ENCODE measurements at regions of chr1 and their contacts with region 1.

Region 1: DNA sequence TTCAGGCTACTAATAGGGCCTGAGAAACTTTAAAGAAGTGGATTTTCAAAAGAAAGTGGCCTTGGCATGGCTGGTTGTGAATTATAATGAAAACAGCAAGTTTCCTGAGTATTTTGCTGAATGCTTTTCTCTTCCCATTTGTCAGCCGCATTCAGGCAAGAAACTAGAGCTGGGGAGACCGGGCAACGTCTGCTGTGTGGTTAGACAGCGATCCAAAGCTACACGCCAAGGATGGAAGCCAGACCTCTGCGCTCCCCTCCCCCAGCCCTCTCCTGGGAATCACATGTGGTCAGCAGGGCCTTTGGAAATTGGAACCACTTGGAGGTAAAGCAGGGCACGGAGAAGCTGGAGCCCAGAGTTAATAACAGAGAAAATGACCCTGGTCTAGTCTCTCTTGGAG is 114.1 kb upstream of the CD34 start:
- DNase-seq: no peak
- H3K4me3 ChIP-seq: no peak overlapping the region
- H3K27ac ChIP-seq: no peak overlapping the region
- H3K4me1 ChIP-seq: no peaks in the 10 kb centered on the region
- H3K27me3 ChIP-seq: no peaks in the 10 kb centered on the region
- CTCF ChIP-seq: no peak

Region 2: GRCh38 chr1:207873055-207873890 is 151.8 kb before region 1 on chr1:
- CTCF ChIA-PET with region 1: no interaction called
- POLR2A ChIA-PET with region 1: no interaction called
- intact Hi-C with region 1: no loop called
- DNase-seq: no peak
- H3K4me3 ChIP-seq: no peak overlapping the region
- H3K27ac ChIP-seq: no peak overlapping the region
- H3K4me1 ChIP-seq: no peaks in the 10 kb centered on the region
- H3K27me3 ChIP-seq: no peaks in the 10 kb centered on the region
- CTCF ChIP-seq: no peak

Region 3: GRCh38 chr1:207941665-207942064 is 83.4 kb before region 1 on chr1:
- CTCF ChIA-PET with region 1: no interaction called
- POLR2A ChIA-PET with region 1: no interaction called
- intact Hi-C with region 1: no loop called
- DNase-seq: peak; percentile 37
- H3K4me3 ChIP-seq: no peak overlapping the region
- H3K27ac ChIP-seq: no peak overlapping the region
- H3K4me1 ChIP-seq: no peaks in the 10 kb centered on the region
- H3K27me3 ChIP-seq: peaks cover 50% of the 10 kb centered on the region
- CTCF ChIP-seq: no peak

Region 4: DNA sequence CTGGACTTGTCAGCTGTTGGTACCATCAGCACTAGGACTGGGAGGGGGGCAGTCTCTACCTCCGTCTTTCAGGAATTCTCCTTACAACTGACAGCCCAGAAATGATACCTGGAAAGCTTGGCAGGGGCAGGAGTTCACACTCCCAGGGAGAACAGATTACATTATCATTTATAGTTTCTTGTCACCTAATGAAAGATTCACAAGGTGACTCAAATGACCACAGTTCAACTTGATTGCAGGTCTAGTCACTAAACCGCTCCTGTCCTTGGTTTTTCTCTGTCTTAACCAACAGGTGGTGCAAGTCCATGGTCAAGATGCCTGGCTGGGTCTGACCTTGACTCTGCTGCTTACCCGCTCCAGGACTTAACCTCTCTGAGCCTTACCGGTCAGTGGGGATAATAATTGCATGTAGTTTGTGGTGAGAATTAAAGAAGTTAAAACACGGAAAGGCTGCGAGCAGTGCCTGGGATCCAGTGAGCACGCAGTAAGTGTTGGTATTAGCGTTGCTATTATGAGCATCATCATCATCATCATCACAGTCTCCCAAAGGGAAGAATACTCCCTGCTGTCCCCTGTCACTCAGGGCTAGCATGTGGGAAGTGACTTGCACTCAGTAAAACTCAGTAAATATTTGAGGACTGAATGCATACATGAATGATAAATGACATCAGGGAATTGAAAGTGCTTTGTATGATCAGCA is 11.2 kb after region 1 on chr1:
- CTCF ChIA-PET with region 1: interaction called, 13 read pairs
- POLR2A ChIA-PET with region 1: no interaction called
- intact Hi-C with region 1: no loop called
- DNase-seq: no peak
- H3K4me3 ChIP-seq: no peak overlapping the region
- H3K27ac ChIP-seq: no peak overlapping the region
- H3K4me1 ChIP-seq: no peaks in the 10 kb centered on the region
- H3K27me3 ChIP-seq: peaks cover 27% of the 10 kb centered on the region
- CTCF ChIP-seq: no peak

Region 5: DNA sequence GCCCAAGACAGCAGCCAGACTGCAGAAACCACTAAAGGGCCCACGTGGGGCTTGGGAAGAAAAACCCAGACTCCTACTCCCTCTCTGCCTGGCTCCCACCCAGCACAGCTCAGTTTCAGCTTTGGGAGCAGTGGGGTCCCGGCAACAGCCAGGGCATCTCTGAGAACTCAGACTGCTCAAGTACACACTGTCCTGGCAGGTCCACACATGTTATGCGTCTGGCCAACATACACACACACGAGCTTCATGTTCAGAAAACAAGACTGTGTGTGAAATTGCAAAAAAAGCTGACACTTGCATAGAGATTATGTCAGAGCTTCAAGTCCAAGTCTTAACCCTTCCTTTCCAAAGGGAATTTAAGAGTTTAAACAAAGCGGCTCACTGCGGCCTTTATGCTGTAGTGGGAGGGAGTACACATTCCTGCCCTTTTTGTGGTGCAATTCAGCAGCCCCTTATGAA is 22.5 kb after region 1 on chr1:
- CTCF ChIA-PET with region 1: interaction called, 10 read pairs
- POLR2A ChIA-PET with region 1: no interaction called
- intact Hi-C with region 1: no loop called
- DNase-seq: no peak
- H3K4me3 ChIP-seq: no peak overlapping the region
- H3K27ac ChIP-seq: no peak overlapping the region
- H3K4me1 ChIP-seq: no peaks in the 10 kb centered on the region
- H3K27me3 ChIP-seq: peaks cover 9% of the 10 kb centered on the region
- CTCF ChIP-seq: no peak

Region 6: DNA sequence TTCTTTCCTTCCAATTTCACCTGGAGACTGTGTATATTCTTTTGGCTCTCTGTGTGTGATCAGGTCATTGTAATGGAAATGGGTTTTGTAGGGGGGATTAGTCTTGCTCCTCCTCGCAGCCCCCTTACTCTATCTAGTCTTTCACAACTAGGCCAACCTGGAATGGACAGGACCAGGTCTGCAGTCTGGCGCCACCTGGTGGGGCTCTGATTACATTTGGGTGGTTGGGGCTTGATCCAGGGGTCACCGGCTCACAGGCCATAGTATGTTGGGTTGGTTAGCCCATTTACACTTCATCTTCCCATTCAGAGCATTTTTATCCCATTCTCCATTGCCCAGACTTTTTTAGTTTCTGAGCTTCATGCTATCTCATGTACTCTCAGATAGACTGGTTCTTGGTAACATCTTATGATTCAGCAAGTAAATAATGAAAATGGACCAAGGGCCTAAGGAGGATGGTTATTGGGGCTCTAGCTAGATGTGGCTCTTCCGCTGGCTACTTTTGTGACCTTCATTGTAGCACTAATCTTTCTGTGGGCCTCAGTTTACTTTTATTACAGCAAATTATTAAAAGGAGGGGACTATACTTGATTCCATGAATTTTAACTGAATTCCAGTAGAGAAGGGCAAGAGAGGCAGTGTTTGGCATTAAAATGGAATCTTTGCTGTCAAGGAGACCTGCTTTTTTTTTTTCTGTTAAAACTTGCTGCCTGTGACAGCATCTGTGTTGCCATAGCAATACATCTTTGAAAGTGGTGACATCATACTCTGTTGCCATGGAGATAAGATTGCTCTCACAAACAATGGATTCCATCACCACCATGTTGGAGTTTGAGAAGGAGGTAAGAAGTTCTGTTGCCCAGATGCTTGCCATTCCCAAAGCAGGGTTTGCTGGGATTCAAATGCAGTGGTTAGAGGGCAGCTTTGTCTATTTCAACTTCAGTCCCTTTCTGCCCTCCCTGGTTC is 69.0 kb after region 1 on chr1:
- CTCF ChIA-PET with region 1: interaction called, 9 read pairs
- POLR2A ChIA-PET with region 1: no interaction called
- intact Hi-C with region 1: loop called (anchors 2 kb)
- DNase-seq: peak; percentile 53
- H3K4me3 ChIP-seq: no peak overlapping the region
- H3K27ac ChIP-seq: no peak overlapping the region
- H3K4me1 ChIP-seq: no peaks in the 10 kb centered on the region
- H3K27me3 ChIP-seq: peaks cover 6% of the 10 kb centered on the region
- CTCF ChIP-seq: peak; percentile 87

Region 7: GRCh38 chr1:208118841-208119606 is 94.0 kb after region 1 on chr1:
- CTCF ChIA-PET with region 1: no interaction called
- POLR2A ChIA-PET with region 1: no interaction called
- intact Hi-C with region 1: no loop called
- DNase-seq: no peak
- H3K4me3 ChIP-seq: no peak overlapping the region
- H3K27ac ChIP-seq: no peak overlapping the region
- H3K4me1 ChIP-seq: no peaks in the 10 kb centered on the region
- H3K27me3 ChIP-seq: peaks cover 38% of the 10 kb centered on the region
- CTCF ChIP-seq: no peak

Region 8: DNA sequence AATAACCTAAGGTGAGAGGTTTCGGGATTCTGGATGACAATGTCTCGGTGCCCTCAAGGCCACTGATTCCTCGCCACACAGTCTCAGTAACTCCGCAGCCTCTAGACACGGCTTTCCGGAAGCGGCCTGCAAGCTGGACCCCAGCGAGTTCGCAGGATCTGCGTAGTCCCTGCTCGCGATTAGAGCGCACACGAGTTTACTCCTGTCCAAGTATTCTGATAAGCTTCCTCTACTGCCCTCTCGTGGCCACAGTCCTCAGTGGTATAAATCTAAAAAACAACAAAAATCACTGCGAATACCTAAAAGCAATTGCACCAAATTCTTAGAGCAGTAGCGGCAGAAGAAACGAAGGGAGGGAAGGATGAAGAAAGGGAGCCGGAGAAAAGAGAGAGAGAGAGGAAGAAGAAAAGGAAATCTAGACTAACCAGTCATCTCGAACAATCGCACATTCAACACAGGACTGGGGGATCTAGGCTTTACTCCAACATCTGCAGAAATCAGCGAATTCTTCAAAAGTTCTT is 220.2 kb after region 1 on chr1:
- CTCF ChIA-PET with region 1: interaction called, 56 read pairs
- POLR2A ChIA-PET with region 1: no interaction called
- intact Hi-C with region 1: loop called (anchors 1 kb)
- DNase-seq: peak; percentile 88
- H3K4me3 ChIP-seq: no peak overlapping the region
- H3K27ac ChIP-seq: no peak overlapping the region
- H3K4me1 ChIP-seq: peaks cover 4% of the 10 kb centered on the region
- H3K27me3 ChIP-seq: peaks cover 74% of the 10 kb centered on the region
- CTCF ChIP-seq: peak; percentile 91

Region 9: GRCh38 chr1:208866386-208866955 is 841.4 kb after region 1 on chr1:
- CTCF ChIA-PET with region 1: no interaction called
- POLR2A ChIA-PET with region 1: no interaction called
- intact Hi-C with region 1: no loop called
- DNase-seq: no peak
- H3K4me3 ChIP-seq: no peak overlapping the region
- H3K27ac ChIP-seq: no peak overlapping the region
- H3K4me1 ChIP-seq: no peaks in the 10 kb centered on the region
- H3K27me3 ChIP-seq: no peaks in the 10 kb centered on the region
- CTCF ChIP-seq: no peak

Region 10: GRCh38 chr1:209248649-209249279 is 1223.7 kb after region 1 on chr1:
- CTCF ChIA-PET with region 1: interaction called, 11 read pairs
- POLR2A ChIA-PET with region 1: no interaction called
- intact Hi-C with region 1: no loop called
- DNase-seq: peak; percentile 63
- H3K4me3 ChIP-seq: no peak overlapping the region
- H3K27ac ChIP-seq: no peak overlapping the region
- H3K4me1 ChIP-seq: no peaks in the 10 kb centered on the region
- H3K27me3 ChIP-seq: peaks cover 18% of the 10 kb centered on the region
- CTCF ChIP-seq: peak; percentile 88